Right cardiac atrium (tissue), 5 donors: ENCODE measurements at regions of chr17 and their contacts with region 1.

Region 1: DNA sequence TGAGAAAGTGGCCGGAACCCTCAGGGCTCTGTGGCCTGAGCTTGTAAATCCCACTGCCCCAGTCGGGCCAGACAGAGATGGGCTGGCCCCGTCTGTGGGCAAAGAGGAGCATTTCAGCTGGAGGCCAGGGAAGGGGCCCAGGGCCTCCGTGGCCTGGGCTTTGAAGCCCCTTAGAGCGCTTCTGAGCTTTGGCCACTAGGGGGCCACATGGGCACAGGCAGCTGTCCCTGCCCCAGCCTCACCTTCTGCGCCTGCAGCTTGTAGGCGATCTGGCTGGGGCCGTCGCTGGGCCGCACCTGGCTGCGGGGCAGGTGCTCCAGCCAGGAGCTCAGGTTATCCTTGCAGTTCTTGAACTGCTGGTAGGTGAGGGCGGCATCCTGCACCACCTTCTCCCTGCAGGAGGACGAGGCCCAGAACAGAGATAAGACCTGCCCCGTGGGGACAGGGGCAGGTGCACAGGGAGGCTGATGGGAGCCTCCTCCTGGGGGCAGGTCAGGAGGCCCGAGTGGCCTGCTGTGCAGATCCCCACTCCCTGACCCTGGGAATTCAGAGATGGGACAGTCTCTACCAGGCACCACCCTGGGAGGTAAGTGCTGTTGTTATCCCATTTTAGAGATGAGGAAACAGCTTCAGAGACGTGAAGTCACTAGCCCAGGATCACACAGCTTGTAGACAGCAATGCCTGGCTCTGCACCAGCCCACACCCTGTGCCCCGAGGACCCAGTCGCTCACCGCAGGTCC is 12.8 kb downstream of the EVPL start:
- DNase-seq: peak; percentile 67 to 87 (median 81)
- ATAC-seq: peak; percentile 72 to 78
- H3K4me3 ChIP-seq: no peak overlapping the region
- H3K27ac ChIP-seq: no peak overlapping the region
- H3K4me1 ChIP-seq: no peaks in the 10 kb centered on the region
- H3K27me3 ChIP-seq: no peaks in the 10 kb centered on the region

Region 2: DNA sequence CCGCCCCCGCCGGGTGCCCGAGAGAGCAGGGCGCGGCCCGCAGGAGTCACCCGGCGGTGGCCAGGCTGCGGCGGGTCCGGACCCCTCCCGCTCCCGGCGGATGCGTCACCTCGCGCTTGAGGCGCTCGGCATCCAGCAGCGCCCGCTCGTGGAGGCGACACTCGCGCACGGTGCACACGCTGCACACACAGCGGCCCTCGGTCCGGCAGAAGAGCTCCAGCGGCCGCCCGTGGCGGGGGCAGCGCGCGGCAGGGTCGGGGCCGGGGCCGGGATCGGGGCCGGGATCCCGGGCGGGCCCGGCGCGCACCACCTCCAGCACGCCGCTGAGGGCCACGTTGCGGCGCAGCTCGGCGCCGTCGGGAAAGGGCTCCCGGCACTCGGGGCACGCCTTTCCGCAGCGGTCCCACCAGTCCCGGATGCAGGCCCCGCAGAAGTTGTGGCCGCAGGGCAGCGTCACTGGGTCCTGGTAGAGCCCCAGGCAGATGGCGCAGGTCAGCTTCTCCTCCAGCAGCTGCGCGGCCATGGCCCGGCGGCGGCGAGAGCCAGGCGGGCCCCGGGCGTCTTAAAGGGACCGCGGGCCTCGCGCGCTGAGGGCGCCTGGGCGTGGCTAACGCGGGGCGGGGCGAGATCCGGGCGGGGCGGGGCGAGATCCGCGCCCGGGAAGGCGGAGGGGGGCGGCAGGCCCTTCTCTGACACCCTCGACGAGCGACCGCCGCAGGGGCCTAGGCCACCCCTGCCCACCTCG is 117.8 kb before region 1 on chr17 and contains the start of gene TRIM65:
- intact Hi-C with region 1: no loop called
- DNase-seq: peak; percentile 91 to 96 (median 95)
- ATAC-seq: peak; percentile 80 to 87
- H3K4me3 ChIP-seq: peak within 1 kb of the TSS; percentile 60
- H3K27ac ChIP-seq: peak within 1 kb of the TSS; percentile 90
- H3K4me1 ChIP-seq: no peaks in the 10 kb centered on the region
- H3K27me3 ChIP-seq: no peaks in the 10 kb centered on the region
- total RNA-seq, gene TRIM65: 5.7 to 10.7 (median 7.7) TPM

Region 3: GRCh38 chr17:76296186-76296585 is 281.8 kb after region 1 on chr17:
- intact Hi-C with region 1: loop called in 3 of 4 experiments (anchors 10 kb)
- DNase-seq: no peak
- ATAC-seq: peak; percentile 62 to 66
- H3K4me3 ChIP-seq: no peak overlapping the region
- H3K27ac ChIP-seq: no peak overlapping the region
- H3K4me1 ChIP-seq: no peaks in the 10 kb centered on the region
- H3K27me3 ChIP-seq: no peaks in the 10 kb centered on the region